Activated naive CD4-positive, alpha-beta T cell treated with anti-CD3 and anti-CD28 coated beads for 36 hours (primary cell): ENCODE measurements at regions of chr10 and their contacts with region 1.

Region 1: GRCh38 chr10:86899670-86900276 is 57.6 kb downstream of the MMRN2 start:
- DNase-seq: peak; percentile 63
- H3K4me3 Mint-ChIP-seq: no peak overlapping the region
- H3K27ac Mint-ChIP-seq: no peak overlapping the region
- H3K4me1 Mint-ChIP-seq: no peaks in the 10 kb centered on the region
- H3K27me3 Mint-ChIP-seq: no peaks in the 10 kb centered on the region

Region 2: DNA sequence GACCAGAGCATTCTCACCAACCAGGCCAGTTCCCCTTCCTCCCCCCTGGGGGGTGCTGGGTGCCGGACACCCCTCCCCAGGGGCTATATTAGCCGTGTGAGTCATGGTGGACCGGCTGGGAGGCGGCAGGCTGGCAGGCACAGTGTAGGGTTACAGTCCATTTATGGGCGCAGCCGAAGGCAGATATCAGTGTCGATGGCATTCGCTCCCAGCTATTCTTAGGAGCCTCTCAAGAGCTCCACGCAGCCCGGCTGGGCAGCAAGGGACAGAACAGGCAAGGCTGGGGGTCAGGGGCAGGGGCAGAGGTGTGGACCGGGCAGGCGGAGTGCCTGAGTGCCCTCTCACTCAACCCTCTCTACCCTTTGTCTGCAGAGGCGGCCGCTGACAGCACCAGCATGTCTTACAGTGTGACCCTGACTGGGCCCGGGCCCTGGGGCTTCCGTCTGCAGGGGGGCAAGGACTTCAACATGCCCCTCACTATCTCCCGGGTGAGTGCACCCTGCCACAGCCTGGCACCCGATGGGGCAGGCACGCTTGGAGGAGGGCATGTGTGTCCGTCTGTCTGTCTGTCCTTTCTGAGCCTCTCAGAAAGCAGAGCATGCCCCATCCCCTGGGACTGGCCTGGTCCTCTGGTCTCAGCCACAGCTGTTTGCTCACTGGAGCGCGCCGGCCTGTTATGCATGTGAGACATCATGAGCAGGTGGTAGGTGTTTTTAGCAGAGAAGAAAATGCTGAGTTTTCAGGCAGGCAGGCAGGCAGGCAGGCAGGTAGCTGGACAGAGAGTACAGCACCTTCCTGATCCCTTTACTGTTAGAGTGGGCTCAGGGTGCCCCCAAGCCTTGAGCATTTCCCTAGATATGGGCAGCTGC is 231.2 kb before region 1 on chr10 and contains the start of gene LDB3:
- CTCF ChIA-PET with region 1: no interaction called
- intact Hi-C with region 1: no loop called
- DNase-seq: no peak
- H3K4me3 Mint-ChIP-seq: no peak within 1 kb of the TSS
- H3K27ac Mint-ChIP-seq: no peak within 1 kb of the TSS
- H3K4me1 Mint-ChIP-seq: no peaks in the 10 kb centered on the region
- H3K27me3 Mint-ChIP-seq: no peaks in the 10 kb centered on the region
- total RNA-seq, gene LDB3: 0.10 to 0.38 TPM

Region 3: DNA sequence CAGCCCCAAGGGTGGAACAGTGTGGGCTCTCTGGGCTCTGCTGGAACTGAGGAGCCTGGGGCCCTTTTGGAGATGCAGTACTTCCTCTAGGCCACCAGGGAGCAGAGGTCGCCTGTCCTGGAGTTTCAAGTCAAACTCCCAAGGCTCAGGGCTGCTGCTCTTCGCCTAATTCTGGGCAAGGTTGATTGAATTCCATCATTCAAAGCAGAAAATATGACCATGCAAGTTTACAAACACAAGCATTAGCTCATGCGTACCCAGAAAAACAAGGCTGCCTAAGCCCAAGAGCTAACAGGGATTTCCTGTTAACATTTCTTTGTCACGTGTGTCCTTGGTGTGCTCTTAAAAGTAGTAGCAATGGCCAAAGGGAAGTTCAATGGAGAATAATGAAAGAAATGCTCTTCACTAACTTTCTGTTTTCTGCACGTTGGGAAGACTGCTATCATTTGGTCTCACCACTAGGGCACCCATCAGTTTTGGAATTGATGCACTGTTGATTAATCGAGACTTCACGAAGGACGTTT is 211.3 kb before region 1 on chr10:
- CTCF ChIA-PET with region 1: interaction called, 31 read pairs
- intact Hi-C with region 1: loop called (anchors 1 kb)
- DNase-seq: peak; percentile 66
- H3K4me3 Mint-ChIP-seq: no peak overlapping the region
- H3K27ac Mint-ChIP-seq: no peak overlapping the region
- H3K4me1 Mint-ChIP-seq: no peaks in the 10 kb centered on the region
- H3K27me3 Mint-ChIP-seq: no peaks in the 10 kb centered on the region

Region 4: GRCh38 chr10:86693721-86694369 is 205.9 kb before region 1 on chr10:
- CTCF ChIA-PET with region 1: interaction called, 31 read pairs
- intact Hi-C with region 1: loop called (anchors 1 kb)
- DNase-seq: peak; percentile 55
- H3K4me3 Mint-ChIP-seq: no peak overlapping the region
- H3K27ac Mint-ChIP-seq: no peak overlapping the region
- H3K4me1 Mint-ChIP-seq: no peaks in the 10 kb centered on the region
- H3K27me3 Mint-ChIP-seq: no peaks in the 10 kb centered on the region